ENCODE measurements at regions of chr2 and their contacts with region 1.

Region 1: GRCh38 chr2:233711312-233712008 is 1.2 kb upstream of the UGT1A5 start:
- DNase-seq: peak; percentile 86
- H3K4me3 Mint-ChIP-seq: no peak overlapping the region
- H3K27ac Mint-ChIP-seq: no peak overlapping the region
- H3K4me1 Mint-ChIP-seq: peaks cover 31% of the 10 kb centered on the region
- H3K27me3 Mint-ChIP-seq: no peaks in the 10 kb centered on the region
- CTCF ChIP-seq: peak; percentile 89

Region 2: DNA sequence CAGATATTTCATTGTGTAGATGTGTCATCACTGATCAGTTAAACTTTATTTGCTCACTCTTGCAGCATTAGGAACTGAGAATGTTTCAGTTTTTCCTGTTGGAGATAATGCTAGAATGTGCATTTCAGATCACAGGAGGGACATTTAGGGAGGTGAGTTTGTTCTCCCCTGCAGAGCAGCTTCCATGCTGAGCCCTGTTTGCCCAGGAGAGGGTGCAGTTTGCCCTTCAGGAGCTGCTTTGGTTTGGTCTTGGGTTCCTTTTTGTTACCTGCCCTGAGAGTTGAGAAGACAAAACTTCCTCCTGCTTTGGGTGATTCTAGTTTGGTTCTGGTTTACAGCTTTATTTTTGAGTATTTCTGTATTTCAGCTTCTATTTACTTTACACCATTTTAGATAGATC is 307.2 kb before region 1 on chr2:
- CTCF ChIA-PET with region 1: no interaction called
- POLR2A ChIA-PET with region 1: no interaction called
- intact Hi-C with region 1: loop called (anchors 2 kb)
- DNase-seq: peak; percentile 76
- H3K4me3 Mint-ChIP-seq: no peak overlapping the region
- H3K27ac Mint-ChIP-seq: no peak overlapping the region
- H3K4me1 Mint-ChIP-seq: peaks cover 5% of the 10 kb centered on the region
- H3K27me3 Mint-ChIP-seq: no peaks in the 10 kb centered on the region
- CTCF ChIP-seq: peak; percentile 75

Region 3: DNA sequence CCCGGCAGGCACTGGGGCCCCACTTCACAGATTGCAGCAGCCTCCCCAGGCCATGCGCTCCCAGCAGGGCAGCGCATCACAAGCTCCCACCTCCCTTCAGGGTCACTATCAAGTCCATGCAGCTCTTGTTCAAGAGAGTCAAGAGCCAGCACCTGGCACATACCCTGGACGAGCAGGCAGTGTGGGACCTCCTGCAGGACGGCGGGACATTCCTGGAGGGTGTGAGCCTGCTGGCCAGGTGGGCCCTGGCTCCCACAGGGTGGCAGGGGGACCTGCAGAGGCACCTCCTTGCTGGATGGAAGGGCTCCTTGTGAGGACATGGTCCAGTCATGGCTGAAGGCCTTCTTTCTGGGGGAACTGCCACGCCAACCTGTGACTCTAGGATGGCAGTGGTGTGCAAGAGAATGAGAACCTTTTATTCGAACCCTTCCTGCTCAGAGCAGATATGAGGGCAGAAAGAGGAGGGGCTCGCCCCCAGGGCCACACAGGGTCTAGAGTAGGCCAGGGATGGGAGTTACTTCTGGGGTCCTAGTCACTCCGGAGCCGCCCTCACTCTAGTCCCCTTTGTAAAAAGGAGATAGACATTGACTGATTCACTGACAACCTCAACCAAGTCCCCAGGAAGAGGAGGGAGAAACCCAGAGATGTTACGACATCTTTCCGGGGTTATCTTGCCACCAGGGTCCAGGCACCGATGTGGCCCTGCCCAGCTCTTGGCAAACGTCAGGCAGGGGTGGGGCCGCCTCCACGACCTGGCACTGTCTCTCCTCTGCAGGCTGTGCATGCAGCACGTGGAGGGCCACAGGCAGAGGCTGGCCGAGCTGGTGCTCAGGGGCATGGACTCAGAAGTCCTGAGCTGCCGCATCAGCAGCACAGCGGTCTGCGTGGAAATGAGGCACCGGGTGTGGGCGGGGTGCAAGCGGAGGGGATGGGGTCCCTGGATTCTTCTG is 111.6 kb after region 1 on chr2:
- CTCF ChIA-PET with region 1: no interaction called
- POLR2A ChIA-PET with region 1: no interaction called
- intact Hi-C with region 1: no loop called
- DNase-seq: peak; percentile 11
- H3K4me3 Mint-ChIP-seq: no peak overlapping the region
- H3K27ac Mint-ChIP-seq: no peak overlapping the region
- H3K4me1 Mint-ChIP-seq: no peaks in the 10 kb centered on the region
- H3K27me3 Mint-ChIP-seq: no peaks in the 10 kb centered on the region
- CTCF ChIP-seq: no peak

Region 4: GRCh38 chr2:233928594-233929351 is 217.3 kb after region 1 on chr2:
- CTCF ChIA-PET with region 1: no interaction called
- POLR2A ChIA-PET with region 1: no interaction called
- intact Hi-C with region 1: loop called (anchors 5 kb)
- DNase-seq: peak; percentile 54
- H3K4me3 Mint-ChIP-seq: no peak overlapping the region
- H3K27ac Mint-ChIP-seq: no peak overlapping the region
- H3K4me1 Mint-ChIP-seq: peaks cover 15% of the 10 kb centered on the region
- H3K27me3 Mint-ChIP-seq: peaks cover 33% of the 10 kb centered on the region
- CTCF ChIP-seq: peak; percentile 44

Region 5: DNA sequence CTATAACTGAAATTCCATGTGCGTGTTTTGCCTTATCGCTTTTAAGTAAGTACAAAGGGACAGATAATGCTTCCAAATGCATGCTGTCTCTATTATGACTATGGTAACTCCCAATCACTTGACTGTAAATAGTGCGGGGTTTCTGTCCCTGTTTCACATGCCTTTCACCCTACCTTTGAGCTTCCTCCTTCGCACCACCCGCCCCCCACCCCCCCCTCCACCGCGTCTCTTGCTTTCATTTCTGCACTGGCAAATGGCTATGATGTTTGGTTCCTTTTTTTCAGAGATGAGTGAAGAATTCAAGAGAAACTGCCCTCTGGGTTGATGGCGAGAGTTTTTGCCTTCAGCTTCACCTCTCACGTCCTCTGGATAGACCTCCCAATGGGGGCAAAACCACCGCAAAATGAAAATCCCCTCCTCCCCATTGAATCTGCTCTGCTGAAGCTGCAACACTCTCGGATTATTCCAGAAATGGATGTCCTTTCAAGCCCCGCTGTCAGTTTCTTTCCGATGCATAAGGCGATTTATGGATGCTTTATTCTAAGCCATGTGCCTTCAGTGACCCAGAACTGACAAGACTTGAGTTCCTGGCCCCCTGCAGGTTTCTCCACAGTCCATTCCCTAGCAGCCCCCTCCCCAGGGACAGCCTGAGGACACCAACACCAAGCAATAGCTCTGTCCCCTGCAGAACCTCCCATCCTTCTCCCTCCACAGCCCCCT is 314.2 kb after region 1 on chr2:
- CTCF ChIA-PET with region 1: no interaction called
- POLR2A ChIA-PET with region 1: no interaction called
- intact Hi-C with region 1: no loop called
- DNase-seq: no peak
- H3K4me3 Mint-ChIP-seq: no peak overlapping the region
- H3K27ac Mint-ChIP-seq: no peak overlapping the region
- H3K4me1 Mint-ChIP-seq: no peaks in the 10 kb centered on the region
- H3K27me3 Mint-ChIP-seq: peaks cover 23% of the 10 kb centered on the region
- CTCF ChIP-seq: no peak

Measured in MCF 10A (cell line).